ENCODE measurements at regions of chr2 and their contacts with region 1.

Region 1: GRCh38 chr2:171687287-171688128 is at the start of gene DYNC1I2:
- DNase-seq: peak; percentile 88
- H3K4me3 Mint-ChIP-seq: peak within 1 kb of the TSS; percentile 89
- H3K27ac Mint-ChIP-seq: peak within 1 kb of the TSS; percentile 85
- H3K4me1 Mint-ChIP-seq: peaks cover 20% of the 10 kb centered on the region
- H3K27me3 Mint-ChIP-seq: no peaks in the 10 kb centered on the region
- total RNA-seq, gene DYNC1I2: 54.2 to 55.8 TPM

Region 2: GRCh38 chr2:171383141-171383540 is 304.4 kb before region 1 on chr2:
- CTCF ChIA-PET with region 1: no interaction called
- POLR2A ChIA-PET with region 1: no interaction called
- intact Hi-C with region 1: no loop called
- DNase-seq: no peak
- H3K4me3 Mint-ChIP-seq: no peak overlapping the region
- H3K27ac Mint-ChIP-seq: no peak overlapping the region
- H3K4me1 Mint-ChIP-seq: peaks cover 2% of the 10 kb centered on the region
- H3K27me3 Mint-ChIP-seq: no peaks in the 10 kb centered on the region

Region 3: DNA sequence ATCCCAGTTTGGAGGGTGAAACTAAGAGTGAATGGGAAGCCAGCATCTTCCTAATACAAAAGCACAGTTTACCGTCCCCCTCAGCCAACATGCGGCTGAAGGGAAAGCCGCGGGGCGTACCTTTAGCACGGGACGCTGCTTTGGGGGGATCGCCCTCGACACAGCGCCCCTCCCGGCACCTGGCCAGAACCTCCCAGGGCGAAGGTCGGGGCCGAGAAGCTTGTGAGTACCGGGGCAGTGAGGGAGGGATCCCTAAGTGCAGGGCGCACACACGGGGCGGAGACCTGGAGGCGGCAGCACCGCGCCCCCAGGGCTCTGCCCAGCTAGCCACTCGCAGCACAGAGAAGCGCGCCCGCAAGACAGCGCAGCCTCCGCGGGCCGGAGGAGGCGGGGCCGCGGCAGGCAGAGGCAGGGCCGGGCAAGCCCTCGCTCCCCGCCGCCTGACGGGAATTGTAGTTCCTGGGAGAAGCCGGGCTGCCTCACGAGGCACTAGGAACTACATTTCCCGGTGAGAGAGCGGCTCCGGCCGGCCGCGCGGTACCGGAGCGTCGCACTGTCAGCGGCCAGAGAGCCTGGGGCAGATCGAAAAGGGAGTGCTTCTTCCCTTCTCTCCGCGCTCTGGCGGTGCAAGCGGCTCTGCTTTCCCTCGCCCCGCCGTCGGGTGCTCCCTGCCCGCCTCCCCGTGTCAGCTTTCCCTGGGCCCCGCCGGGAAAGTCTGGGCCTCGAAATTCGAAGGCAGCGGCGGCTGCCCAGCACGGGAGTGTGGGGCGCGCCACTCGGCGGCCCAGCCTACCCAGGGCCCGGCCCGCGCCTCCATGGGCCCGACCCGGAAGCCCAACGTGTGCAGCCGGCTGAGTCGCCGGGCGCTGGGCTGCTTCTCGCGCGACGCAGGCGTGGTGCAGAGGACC is 253.5 kb before region 1 on chr2 and contains the starts of genes DCAF17 and METTL8:
- CTCF ChIA-PET with region 1: no interaction called
- POLR2A ChIA-PET with region 1: no interaction called
- intact Hi-C with region 1: loop called (anchors 5 kb)
- DNase-seq: peak; percentile 96
- H3K4me3 Mint-ChIP-seq: peak within 1 kb of the TSS; percentile 92
- H3K27ac Mint-ChIP-seq: peak within 1 kb of the TSS; percentile 92
- H3K4me1 Mint-ChIP-seq: peaks cover 57% of the 10 kb centered on the region
- H3K27me3 Mint-ChIP-seq: no peaks in the 10 kb centered on the region
- total RNA-seq, gene DCAF17: 14.1 to 14.7 TPM
- total RNA-seq, gene METTL8: 33.3 to 40.9 TPM

Region 4: GRCh38 chr2:171574149-171574795 is 113.2 kb before region 1 on chr2:
- CTCF ChIA-PET with region 1: no interaction called
- POLR2A ChIA-PET with region 1: no interaction called
- intact Hi-C with region 1: loop called (anchors 5 kb)
- DNase-seq: peak; percentile 90
- H3K4me3 Mint-ChIP-seq: no peak overlapping the region
- H3K27ac Mint-ChIP-seq: no peak overlapping the region
- H3K4me1 Mint-ChIP-seq: peaks cover 7% of the 10 kb centered on the region
- H3K27me3 Mint-ChIP-seq: peaks cover 2% of the 10 kb centered on the region

Region 5: DNA sequence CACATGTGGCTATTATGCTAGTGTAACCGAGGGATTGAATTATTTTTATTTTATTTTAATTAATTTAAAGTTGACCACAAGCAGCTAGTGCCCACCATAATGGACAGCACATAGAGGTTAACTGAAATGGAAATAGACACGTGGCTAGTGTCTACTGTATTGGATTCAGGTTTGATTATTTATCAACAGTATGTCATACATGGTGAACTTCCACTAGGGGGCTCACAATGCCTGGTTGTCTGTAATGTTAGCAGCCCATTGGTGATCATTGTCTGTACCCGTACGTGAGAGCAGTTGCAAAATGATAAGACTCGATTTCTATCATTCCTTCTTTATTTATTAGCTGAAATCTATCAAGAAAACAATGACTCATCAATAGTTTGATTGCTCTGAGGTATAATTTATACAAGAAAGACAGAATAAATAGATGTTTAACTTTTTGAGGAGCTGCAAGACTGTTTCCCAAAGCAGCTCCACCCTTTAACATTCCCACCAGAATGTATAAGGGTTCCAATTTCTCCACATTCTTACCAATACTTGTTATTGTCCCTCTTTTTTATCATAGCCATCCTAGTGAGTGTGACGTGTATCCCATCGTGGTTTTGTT is 88.7 kb before region 1 on chr2:
- CTCF ChIA-PET with region 1: interaction called, 6 read pairs
- POLR2A ChIA-PET with region 1: no interaction called
- intact Hi-C with region 1: loop called (anchors 5 kb)
- DNase-seq: peak; percentile 47
- H3K4me3 Mint-ChIP-seq: no peak overlapping the region
- H3K27ac Mint-ChIP-seq: no peak overlapping the region
- H3K4me1 Mint-ChIP-seq: peaks cover 2% of the 10 kb centered on the region
- H3K27me3 Mint-ChIP-seq: peaks cover 4% of the 10 kb centered on the region

Region 6: GRCh38 chr2:171703574-171704347 is 16.3 kb after region 1 on chr2:
- CTCF ChIA-PET with region 1: interaction called, 17 read pairs
- POLR2A ChIA-PET with region 1: interaction called, 7 read pairs
- intact Hi-C with region 1: no loop called
- DNase-seq: no peak
- H3K4me3 Mint-ChIP-seq: no peak overlapping the region
- H3K27ac Mint-ChIP-seq: no peak overlapping the region
- H3K4me1 Mint-ChIP-seq: peaks cover 7% of the 10 kb centered on the region
- H3K27me3 Mint-ChIP-seq: no peaks in the 10 kb centered on the region

Region 7: DNA sequence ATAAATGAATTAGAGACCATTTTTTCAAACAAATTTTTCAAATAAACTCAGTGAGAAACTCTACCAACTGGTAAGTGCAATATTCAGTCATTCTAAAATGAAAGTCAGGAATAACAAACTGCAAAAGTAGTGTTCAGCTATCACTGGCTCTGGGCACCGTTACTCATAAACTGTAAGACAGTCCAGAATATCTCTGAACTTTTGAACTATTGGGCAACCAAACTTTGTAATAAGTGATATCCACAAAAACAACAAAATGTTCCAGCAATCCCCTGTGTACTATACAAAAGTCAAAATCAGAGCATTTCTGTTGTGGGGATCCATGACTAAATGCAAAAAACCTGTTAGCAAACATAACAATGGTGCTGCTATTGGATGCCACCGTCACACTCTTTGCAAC is 150.2 kb after region 1 on chr2:
- CTCF ChIA-PET with region 1: no interaction called
- POLR2A ChIA-PET with region 1: no interaction called
- intact Hi-C with region 1: no loop called
- DNase-seq: no peak
- H3K4me3 Mint-ChIP-seq: no peak overlapping the region
- H3K27ac Mint-ChIP-seq: no peak overlapping the region
- H3K4me1 Mint-ChIP-seq: no peaks in the 10 kb centered on the region
- H3K27me3 Mint-ChIP-seq: no peaks in the 10 kb centered on the region

Region 8: GRCh38 chr2:171922230-171923022 is 234.9 kb after region 1 on chr2 and contains the start of gene HAT1:
- CTCF ChIA-PET with region 1: no interaction called
- POLR2A ChIA-PET with region 1: no interaction called
- intact Hi-C with region 1: loop called (anchors 2 kb)
- DNase-seq: peak; percentile 99
- H3K4me3 Mint-ChIP-seq: peak within 1 kb of the TSS; percentile 97
- H3K27ac Mint-ChIP-seq: peak within 1 kb of the TSS; percentile 98
- H3K4me1 Mint-ChIP-seq: peaks cover 33% of the 10 kb centered on the region
- H3K27me3 Mint-ChIP-seq: no peaks in the 10 kb centered on the region
- total RNA-seq, gene HAT1: 86.2 to 90.8 TPM

Region 9: GRCh38 chr2:172555522-172556283 is 868.2 kb after region 1 on chr2 and contains the start of gene PDK1:
- CTCF ChIA-PET with region 1: no interaction called
- POLR2A ChIA-PET with region 1: no interaction called
- intact Hi-C with region 1: loop called (anchors 5 kb)
- DNase-seq: peak; percentile 93
- H3K4me3 Mint-ChIP-seq: peak within 1 kb of the TSS; percentile 90
- H3K27ac Mint-ChIP-seq: peak within 1 kb of the TSS; percentile 90
- H3K4me1 Mint-ChIP-seq: peaks cover 45% of the 10 kb centered on the region
- H3K27me3 Mint-ChIP-seq: peaks cover 6% of the 10 kb centered on the region
- total RNA-seq, gene PDK1: 24.7 to 31.6 TPM